ENCODE measurements at regions of chr11 and their contacts with region 1.

Region 1: GRCh38 chr11:125568970-125569914 is at the start of gene EI24:
- DNase-seq: peak; percentile 93
- H3K4me3 ChIP-seq: peak within 1 kb of the TSS; percentile 75 to 99 (median 87)
- H3K27ac ChIP-seq: peak within 1 kb of the TSS; percentile 87 to 90 (median 88)
- H3K4me1 ChIP-seq: peaks cover 5 to 24% (median 9%) of the 10 kb centered on the region in 4 donors
- H3K27me3 ChIP-seq: no peaks in the 10 kb centered on the region
- CTCF ChIP-seq: peak; percentile 65 to 79 (median 69)
- EP300 ChIP-seq: no peak
- POLR2A ChIP-seq: peak; percentile 31
- total RNA-seq, gene EI24: 53.9 to 107 (median 80.4) TPM

Region 2: GRCh38 chr11:125756050-125756449 is 186.8 kb after region 1 on chr11:
- in situ Hi-C with region 1: no loop called
- intact Hi-C with region 1: no loop called
- DNase-seq: no peak
- H3K4me3 ChIP-seq: no peak overlapping the region
- H3K27ac ChIP-seq: no peak overlapping the region
- H3K4me1 ChIP-seq: no peaks in the 10 kb centered on the region
- H3K27me3 ChIP-seq: no peaks in the 10 kb centered on the region
- CTCF ChIP-seq: no peak
- EP300 ChIP-seq: no peak
- POLR2A ChIP-seq: no peak

Region 3: GRCh38 chr11:125874556-125875124 is 305.4 kb after region 1 on chr11:
- in situ Hi-C with region 1: no loop called
- intact Hi-C with region 1: loop called (anchors 5 kb)
- DNase-seq: peak; percentile 49
- H3K4me3 ChIP-seq: no peak overlapping the region
- H3K27ac ChIP-seq: no peak overlapping the region
- H3K4me1 ChIP-seq: no peaks in the 10 kb centered on the region
- H3K27me3 ChIP-seq: no peaks in the 10 kb centered on the region
- CTCF ChIP-seq: peak; percentile 64 to 73 (median 69)
- EP300 ChIP-seq: no peak
- POLR2A ChIP-seq: no peak

Measured in transverse colon (tissue), 4 donors.